Sigmoid colon (tissue), 7 donors: ENCODE measurements at regions of chr1 and their contacts with region 1.

Region 1: GRCh38 chr1:90964444-90965035 is 57.3 kb downstream of the ZNF644 start:
- DNase-seq: no peak
- H3K4me3 ChIP-seq: no peak overlapping the region
- H3K27ac ChIP-seq: no peak overlapping the region
- H3K4me1 ChIP-seq: peaks cover 0 to 31% (median 5%) of the 10 kb centered on the region in 4 donors
- H3K27me3 ChIP-seq: no peaks in the 10 kb centered on the region
- CTCF ChIP-seq: no peak
- EP300 ChIP-seq: no peak
- POLR2A ChIP-seq: no peak

Region 2: GRCh38 chr1:90579212-90579802 is 385.2 kb before region 1 on chr1:
- intact Hi-C with region 1: loop called (anchors 10 kb)
- DNase-seq: no peak
- H3K4me3 ChIP-seq: no peak overlapping the region
- H3K27ac ChIP-seq: no peak overlapping the region
- H3K4me1 ChIP-seq: no peaks in the 10 kb centered on the region
- H3K27me3 ChIP-seq: no peaks in the 10 kb centered on the region
- CTCF ChIP-seq: peak in 3 of 4 experiments; percentile 27 to 60 (median 27)
- EP300 ChIP-seq: no peak
- POLR2A ChIP-seq: no peak

Region 3: GRCh38 chr1:90721210-90722194 is 243.0 kb before region 1 on chr1:
- intact Hi-C with region 1: loop called (anchors 2 kb)
- DNase-seq: no peak
- H3K4me3 ChIP-seq: no peak overlapping the region
- H3K27ac ChIP-seq: no peak overlapping the region
- H3K4me1 ChIP-seq: peaks cover 0 to 65% (median 57%) of the 10 kb centered on the region in 4 donors
- H3K27me3 ChIP-seq: peaks cover 82 to 100% (median 99%) of the 10 kb centered on the region in 3 donors
- CTCF ChIP-seq: peak in 3 of 4 experiments; percentile 25 to 52 (median 26)
- EP300 ChIP-seq: no peak
- POLR2A ChIP-seq: no peak

Region 4: DNA sequence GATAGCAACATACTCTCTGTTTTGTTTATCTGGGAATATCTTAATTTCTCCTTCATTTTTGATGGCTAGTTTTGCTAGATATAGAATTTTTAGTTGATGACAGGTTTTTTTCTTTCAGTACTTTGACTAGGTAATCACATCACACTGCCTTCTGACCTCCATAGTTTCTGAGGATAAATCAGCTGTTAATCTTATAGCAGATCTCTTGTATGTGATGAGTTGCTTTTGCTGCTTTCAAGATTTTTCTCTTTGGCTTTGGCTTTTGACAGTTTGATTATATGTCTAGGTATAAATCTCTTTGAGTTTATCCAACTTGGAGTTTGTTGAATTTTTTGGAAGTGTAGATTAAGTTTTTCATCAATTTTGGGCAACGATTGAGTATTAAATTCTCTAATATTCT is 85.3 kb before region 1 on chr1:
- intact Hi-C with region 1: no loop called
- DNase-seq: no peak
- H3K4me3 ChIP-seq: no peak overlapping the region
- H3K27ac ChIP-seq: no peak overlapping the region
- H3K4me1 ChIP-seq: no peaks in the 10 kb centered on the region
- H3K27me3 ChIP-seq: no peaks in the 10 kb centered on the region
- CTCF ChIP-seq: no peak
- EP300 ChIP-seq: no peak
- POLR2A ChIP-seq: no peak